Activated B cell treated with CpG ODN at 0.5 μM for 24 hours (primary cell): ENCODE measurements at regions of chr19 and their contacts with region 1.

Region 1: GRCh38 chr19:38263689-38264485 is 486 bp upstream of the SPINT2 start:
- DNase-seq: peak; percentile 86
- ATAC-seq: peak; percentile 89
- H3K4me3 Mint-ChIP-seq: peak overlapping the region; percentile 91
- H3K27ac Mint-ChIP-seq: peak overlapping the region; percentile 99
- H3K4me1 Mint-ChIP-seq: peaks cover 43% of the 10 kb centered on the region
- H3K27me3 Mint-ChIP-seq: no peaks in the 10 kb centered on the region
- CTCF ChIP-seq: no peak

Region 2: GRCh38 chr19:37829526-37829925 is 434.4 kb before region 1 on chr19:
- CTCF ChIA-PET with region 1: no interaction called
- POLR2A ChIA-PET with region 1: no interaction called
- intact Hi-C with region 1: no loop called
- DNase-seq: no peak
- ATAC-seq: no peak
- H3K4me3 Mint-ChIP-seq: no peak overlapping the region
- H3K27ac Mint-ChIP-seq: no peak overlapping the region
- H3K4me1 Mint-ChIP-seq: no peaks in the 10 kb centered on the region
- H3K27me3 Mint-ChIP-seq: no peaks in the 10 kb centered on the region
- CTCF ChIP-seq: no peak

Region 3: GRCh38 chr19:38245826-38246498 is 17.9 kb before region 1 on chr19:
- CTCF ChIA-PET with region 1: interaction called, 5 read pairs
- POLR2A ChIA-PET with region 1: interaction called, 42 read pairs
- intact Hi-C with region 1: no loop called
- DNase-seq: no peak
- ATAC-seq: no peak
- H3K4me3 Mint-ChIP-seq: no peak overlapping the region
- H3K27ac Mint-ChIP-seq: peak overlapping the region; percentile 56
- H3K4me1 Mint-ChIP-seq: peaks cover 29% of the 10 kb centered on the region
- H3K27me3 Mint-ChIP-seq: no peaks in the 10 kb centered on the region
- CTCF ChIP-seq: no peak

Region 4: DNA sequence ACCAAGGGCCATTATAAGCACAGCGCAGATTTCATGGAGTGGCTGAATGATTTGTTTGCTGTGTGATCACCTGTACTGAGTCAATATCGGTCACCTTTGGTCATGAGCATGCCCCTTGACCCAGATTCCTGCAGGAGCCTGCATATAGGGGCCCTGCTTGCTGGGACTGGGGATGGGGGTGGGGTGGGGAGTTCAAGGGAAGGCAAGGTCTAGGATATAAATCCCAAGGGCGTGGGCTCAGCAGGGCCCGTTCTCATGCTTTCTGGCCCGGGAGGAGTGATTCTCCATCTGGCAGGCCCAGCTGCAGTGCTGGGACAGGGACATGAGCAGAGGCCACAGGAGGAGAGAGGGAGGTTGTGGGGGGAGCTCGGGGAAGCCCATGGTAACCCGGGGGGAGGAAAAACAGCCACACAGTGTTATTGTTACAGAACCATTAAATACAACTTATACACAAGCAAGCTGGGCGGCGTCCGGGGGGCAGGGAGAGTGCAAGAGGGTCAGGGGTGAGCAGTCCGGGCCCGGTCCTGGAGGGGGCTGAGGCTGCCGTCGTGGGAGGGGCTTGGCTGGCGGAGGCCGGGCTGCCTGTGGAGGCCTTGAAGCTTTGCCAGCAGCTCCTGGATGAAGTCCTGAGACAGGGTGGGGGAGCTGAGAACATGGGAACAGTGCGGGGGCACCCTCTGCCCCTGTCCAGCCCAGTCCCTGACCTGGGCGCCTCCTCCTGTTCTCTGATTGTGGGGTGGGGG is 12.9 kb before region 1 on chr19:
- CTCF ChIA-PET with region 1: interaction called, 7 read pairs
- POLR2A ChIA-PET with region 1: interaction called, 44 read pairs
- intact Hi-C with region 1: loop called (anchors 1 kb)
- DNase-seq: no peak
- ATAC-seq: no peak
- H3K4me3 Mint-ChIP-seq: peak overlapping the region; percentile 62
- H3K27ac Mint-ChIP-seq: no peak overlapping the region
- H3K4me1 Mint-ChIP-seq: peaks cover 58% of the 10 kb centered on the region
- H3K27me3 Mint-ChIP-seq: no peaks in the 10 kb centered on the region
- CTCF ChIP-seq: no peak

Region 5: DNA sequence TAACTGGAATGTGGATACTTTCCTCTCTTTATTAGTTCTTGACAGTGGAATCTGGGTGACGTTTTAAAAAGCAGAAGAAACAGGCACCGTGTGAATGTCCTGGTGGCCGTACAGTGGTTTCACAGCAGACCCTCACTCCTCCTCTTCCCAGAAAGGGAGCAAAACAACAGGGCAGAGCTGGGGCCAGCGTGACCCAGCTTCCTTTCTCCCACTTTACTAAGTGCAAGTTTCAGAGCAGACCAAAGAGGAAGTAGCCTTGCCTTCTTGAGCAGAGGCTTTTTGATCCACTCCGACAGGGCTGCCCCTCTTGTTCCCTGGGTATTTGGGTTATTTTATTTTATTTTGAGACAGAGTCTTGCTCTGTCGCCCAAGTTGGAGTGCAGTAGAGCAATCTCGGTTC is 20.5 kb after region 1 on chr19:
- CTCF ChIA-PET with region 1: no interaction called
- POLR2A ChIA-PET with region 1: interaction called, 14 read pairs
- intact Hi-C with region 1: loop called (anchors 1 kb)
- DNase-seq: no peak
- ATAC-seq: peak; percentile 57
- H3K4me3 Mint-ChIP-seq: peak overlapping the region; percentile 42
- H3K27ac Mint-ChIP-seq: peak overlapping the region; percentile 91
- H3K4me1 Mint-ChIP-seq: peaks cover 31% of the 10 kb centered on the region
- H3K27me3 Mint-ChIP-seq: no peaks in the 10 kb centered on the region
- CTCF ChIP-seq: no peak

Region 6: DNA sequence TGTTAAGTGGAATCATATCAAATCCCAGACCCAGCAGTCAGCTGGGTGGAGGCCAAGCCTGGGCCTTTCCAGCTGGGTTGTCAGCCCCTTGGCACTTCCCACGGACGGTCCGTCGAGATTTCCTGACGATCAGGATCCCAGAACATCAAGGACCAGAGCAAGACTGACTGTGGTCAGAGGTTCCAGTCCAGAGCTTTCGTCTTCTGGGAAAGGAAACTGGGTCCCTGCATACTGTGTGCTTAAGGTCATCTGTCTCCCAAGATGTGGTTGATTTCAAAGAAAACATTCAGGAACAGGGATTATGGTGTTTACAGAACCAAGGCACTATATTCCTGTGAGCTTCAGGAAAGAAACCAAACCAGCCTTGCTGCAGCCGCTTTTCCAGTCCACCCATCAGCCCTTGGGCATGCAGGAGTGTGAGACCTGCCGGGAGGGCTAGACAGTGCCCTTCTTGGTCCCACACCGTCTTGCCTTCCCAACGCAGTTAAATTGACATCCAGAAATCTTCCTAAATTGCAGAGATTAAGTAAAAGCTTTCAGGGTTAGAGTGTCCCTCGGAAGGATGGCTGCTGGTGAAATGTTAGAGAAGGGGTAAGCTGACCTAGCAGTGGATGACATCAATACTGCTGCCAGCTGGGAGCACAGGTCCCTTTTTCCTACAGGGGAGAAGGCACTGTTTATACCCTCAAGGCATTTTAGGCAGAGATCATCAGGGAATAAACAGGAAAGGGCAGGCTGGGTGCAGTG is 35.1 kb after region 1 on chr19:
- CTCF ChIA-PET with region 1: no interaction called
- POLR2A ChIA-PET with region 1: interaction called, 3 read pairs
- intact Hi-C with region 1: loop called (anchors 5 kb)
- DNase-seq: no peak
- ATAC-seq: no peak
- H3K4me3 Mint-ChIP-seq: no peak overlapping the region
- H3K27ac Mint-ChIP-seq: peak overlapping the region; percentile 18
- H3K4me1 Mint-ChIP-seq: no peaks in the 10 kb centered on the region
- H3K27me3 Mint-ChIP-seq: no peaks in the 10 kb centered on the region
- CTCF ChIP-seq: no peak

Region 7: GRCh38 chr19:38315657-38316476 is 52.0 kb after region 1 on chr19 and contains the start of gene YIF1B:
- CTCF ChIA-PET with region 1: no interaction called
- POLR2A ChIA-PET with region 1: interaction called, 14 read pairs
- intact Hi-C with region 1: loop called (anchors 1 kb)
- DNase-seq: peak; percentile 89
- ATAC-seq: peak; percentile 92
- H3K4me3 Mint-ChIP-seq: peak within 1 kb of the TSS; percentile 85
- H3K27ac Mint-ChIP-seq: peak within 1 kb of the TSS; percentile 94
- H3K4me1 Mint-ChIP-seq: peaks cover 49% of the 10 kb centered on the region
- H3K27me3 Mint-ChIP-seq: no peaks in the 10 kb centered on the region
- CTCF ChIP-seq: no peak
- total RNA-seq, gene YIF1B: 28.7 and 30.1 TPM in 2 replicates

Region 8: GRCh38 chr19:38583219-38583984 is 319.5 kb after region 1 on chr19:
- CTCF ChIA-PET with region 1: no interaction called
- POLR2A ChIA-PET with region 1: no interaction called
- intact Hi-C with region 1: no loop called
- DNase-seq: peak; percentile 25
- ATAC-seq: peak; percentile 81
- H3K4me3 Mint-ChIP-seq: peak overlapping the region; percentile 5
- H3K27ac Mint-ChIP-seq: peak overlapping the region; percentile 37
- H3K4me1 Mint-ChIP-seq: peaks cover 12% of the 10 kb centered on the region
- H3K27me3 Mint-ChIP-seq: no peaks in the 10 kb centered on the region
- CTCF ChIP-seq: no peak

Region 9: GRCh38 chr19:38666663-38667511 is 403.0 kb after region 1 on chr19:
- CTCF ChIA-PET with region 1: no interaction called
- POLR2A ChIA-PET with region 1: no interaction called
- intact Hi-C with region 1: no loop called
- DNase-seq: no peak
- ATAC-seq: peak; percentile 77
- H3K4me3 Mint-ChIP-seq: peak overlapping the region; percentile 76
- H3K27ac Mint-ChIP-seq: peak overlapping the region; percentile 91
- H3K4me1 Mint-ChIP-seq: peaks cover 80% of the 10 kb centered on the region
- H3K27me3 Mint-ChIP-seq: no peaks in the 10 kb centered on the region
- CTCF ChIP-seq: no peak